CD8-positive, alpha-beta T cell (primary cell): ENCODE measurements at regions of chr13 and their contacts with region 1.

Region 1: DNA sequence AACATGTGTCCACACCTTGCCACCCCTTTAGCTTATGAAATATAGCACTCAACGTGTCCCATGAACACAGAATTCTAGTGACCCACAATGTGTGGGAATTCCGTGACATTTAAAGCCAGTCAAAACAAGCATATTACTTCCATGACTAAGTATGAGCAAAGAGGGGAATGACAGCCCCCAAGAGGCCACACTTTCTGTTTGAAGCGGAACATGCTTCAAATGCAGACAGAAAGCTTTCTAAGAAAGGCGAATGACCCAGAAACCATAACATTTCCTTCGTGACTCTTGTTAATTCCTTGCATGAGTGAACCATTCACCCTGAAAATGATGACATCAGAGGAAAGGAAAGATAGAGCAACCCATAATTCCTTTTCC is 122.0 kb upstream of the FNDC3A start:
- DNase-seq: no peak
- ATAC-seq: no peak
- H3K4me3 ChIP-seq: no peak overlapping the region
- H3K4me3 Mint-ChIP-seq: no peak overlapping the region
- H3K27ac ChIP-seq: no peak overlapping the region
- H3K27ac Mint-ChIP-seq: no peak overlapping the region
- H3K4me1 ChIP-seq: no peaks in the 10 kb centered on the region
- H3K4me1 Mint-ChIP-seq: peaks cover 10% of the 10 kb centered on the region
- H3K27me3 ChIP-seq: no peaks in the 10 kb centered on the region
- H3K27me3 Mint-ChIP-seq: peaks cover 8% of the 10 kb centered on the region
- CTCF ChIP-seq: no peak

Region 2: DNA sequence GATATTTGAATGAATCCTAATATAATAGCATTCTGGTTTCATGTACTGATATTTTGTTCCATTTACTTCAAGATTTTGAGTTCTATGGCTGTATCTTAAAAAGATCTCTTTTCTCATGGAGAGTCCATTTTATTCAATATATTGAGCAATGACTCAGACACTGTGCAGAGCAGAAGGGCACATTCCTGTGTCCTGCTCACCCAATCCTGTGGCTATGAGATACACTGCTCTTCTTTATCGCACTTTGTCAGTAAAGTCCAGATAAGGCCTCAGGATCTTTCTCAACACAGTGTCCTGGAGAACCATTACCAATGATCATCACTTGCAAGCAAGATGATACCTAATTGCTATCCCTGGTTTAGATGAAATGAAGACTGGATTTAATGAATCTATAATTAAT is 45.0 kb before region 1 on chr13:
- CTCF ChIA-PET with region 1: no interaction called
- POLR2A ChIA-PET with region 1: no interaction called
- intact Hi-C with region 1: loop called in 1 of 2 experiments (anchors 1 kb)
- DNase-seq: no peak
- ATAC-seq: no peak
- H3K4me3 ChIP-seq: no peak overlapping the region
- H3K4me3 Mint-ChIP-seq: no peak overlapping the region
- H3K27ac ChIP-seq: no peak overlapping the region
- H3K27ac Mint-ChIP-seq: no peak overlapping the region
- H3K4me1 ChIP-seq: peaks cover 9% of the 10 kb centered on the region
- H3K4me1 Mint-ChIP-seq: peaks cover 18% of the 10 kb centered on the region
- H3K27me3 ChIP-seq: no peaks in the 10 kb centered on the region
- H3K27me3 Mint-ChIP-seq: peaks cover 6% of the 10 kb centered on the region
- CTCF ChIP-seq: no peak

Region 3: DNA sequence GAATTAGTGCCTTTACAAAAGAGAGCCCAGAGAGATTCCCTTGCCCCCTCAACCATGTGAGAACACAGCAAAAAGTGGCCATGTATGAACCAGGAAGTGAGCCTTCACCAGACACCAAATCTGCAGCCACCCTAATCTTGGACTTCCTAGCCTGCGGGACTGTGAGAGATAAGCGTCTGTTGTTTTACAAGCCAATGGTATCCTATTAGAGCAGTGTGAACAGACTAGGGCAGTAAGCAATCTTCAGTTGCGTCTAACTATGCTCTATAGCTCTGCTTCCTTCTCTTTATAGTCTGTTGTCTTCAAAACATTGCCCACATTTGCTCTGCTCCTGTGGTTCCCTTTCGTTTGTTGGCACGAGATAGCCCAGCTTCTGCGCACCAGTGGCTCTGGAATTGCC is 12.5 kb after region 1 on chr13:
- CTCF ChIA-PET with region 1: no interaction called
- POLR2A ChIA-PET with region 1: no interaction called
- intact Hi-C with region 1: no loop called
- DNase-seq: no peak
- ATAC-seq: no peak
- H3K4me3 ChIP-seq: no peak overlapping the region
- H3K4me3 Mint-ChIP-seq: no peak overlapping the region
- H3K27ac ChIP-seq: no peak overlapping the region
- H3K27ac Mint-ChIP-seq: no peak overlapping the region
- H3K4me1 ChIP-seq: no peaks in the 10 kb centered on the region
- H3K4me1 Mint-ChIP-seq: no peaks in the 10 kb centered on the region
- H3K27me3 ChIP-seq: peaks cover 0 to 2% of the 10 kb centered on the region in 2 experiments
- H3K27me3 Mint-ChIP-seq: no peaks in the 10 kb centered on the region
- CTCF ChIP-seq: no peak